H1 (cell line): ENCODE measurements at regions of chr1 and their contacts with region 1.

Region 1: GRCh38 chr1:47527658-47528255 is 89.9 kb downstream of the FOXD2 start:
- DNase-seq: peak in 1 of 2 experiments; percentile 79
- H3K4me3 ChIP-seq: no peak overlapping the region
- H3K27ac ChIP-seq: no peak overlapping the region
- H3K4me1 ChIP-seq: peaks cover 4 to 19% (median 6%) of the 10 kb centered on the region in 4 experiments; a peak in 6 of 7 replicates
- H3K27me3 ChIP-seq: peaks cover 0 to 2% (median 0%) of the 10 kb centered on the region in 4 experiments; a peak in 2 of 7 replicates
- CTCF ChIP-seq: peak; percentile 79 to 89 (median 87)
- EP300 ChIP-seq: no peak
- POLR2A ChIP-seq: no peak
- RAD21 ChIP-seq: peak; percentile 90 to 92

Region 2: DNA sequence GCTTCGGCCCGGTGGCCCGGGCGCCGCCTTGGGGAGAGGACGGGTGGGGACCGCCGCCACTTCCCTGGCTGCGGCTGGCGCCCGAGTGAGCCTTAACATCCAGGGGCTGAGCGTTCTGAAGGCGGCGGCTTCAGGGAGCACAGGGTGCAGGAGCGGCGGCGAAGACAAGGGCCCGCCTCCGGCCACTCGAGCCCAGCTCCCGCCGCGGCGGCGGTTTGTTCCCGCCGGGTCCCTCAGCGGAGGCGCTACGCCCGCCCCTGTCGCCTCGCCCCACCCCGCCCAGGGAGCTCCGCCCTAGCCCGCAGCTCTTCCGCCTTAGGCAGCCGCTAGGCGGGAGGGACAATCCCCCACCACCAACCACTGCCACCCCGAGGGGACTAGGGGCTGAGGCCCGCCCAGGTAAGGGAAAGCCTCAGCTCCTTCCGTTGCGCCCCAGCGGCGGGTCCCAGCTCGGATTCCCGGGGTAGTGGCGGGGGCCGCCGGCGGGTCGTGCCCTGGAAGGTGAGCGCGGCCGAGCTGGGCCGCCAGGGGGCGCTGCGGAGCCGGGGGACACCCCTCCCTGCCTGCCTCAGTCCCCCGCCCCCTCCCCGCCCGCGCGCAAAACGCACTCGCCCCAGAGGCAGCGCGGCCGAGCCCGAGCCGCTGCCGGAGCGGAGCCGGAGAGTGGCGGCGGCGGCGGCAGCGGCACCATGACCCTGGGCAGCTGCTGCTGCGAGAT is 90.2 kb before region 1 on chr1 and contains the start of gene FOXD2:
- CTCF ChIA-PET with region 1: interaction called, 26 read pairs
- POLR2A ChIA-PET with region 1: no interaction called
- DNase-seq: peak; percentile 61 to 99
- H3K4me3 ChIP-seq: peak within 1 kb of the TSS; percentile 16 to 65 (median 49)
- H3K27ac ChIP-seq: no peak within 1 kb of the TSS
- H3K4me1 ChIP-seq: peaks cover 3 to 36% (median 18%) of the 10 kb centered on the region in 4 experiments
- H3K27me3 ChIP-seq: peaks cover 92 to 99% (median 98%) of the 10 kb centered on the region in 4 experiments
- CTCF ChIP-seq: peak in 2 of 3 experiments; percentile 54 to 68; a peak in 3 of 4 replicates
- EP300 ChIP-seq: no peak
- POLR2A ChIP-seq: no peak
- RAD21 ChIP-seq: peak; percentile 30 to 38; a peak in 3 of 4 replicates
- total RNA-seq, gene FOXD2: not detected in 2 replicates

Region 3: GRCh38 chr1:47491341-47491753 is 36.4 kb before region 1 on chr1:
- CTCF ChIA-PET with region 1: interaction called, 10 read pairs
- POLR2A ChIA-PET with region 1: no interaction called
- DNase-seq: no peak
- H3K4me3 ChIP-seq: no peak overlapping the region
- H3K27ac ChIP-seq: no peak overlapping the region
- H3K4me1 ChIP-seq: peaks cover 0 to 6% (median 4%) of the 10 kb centered on the region in 4 experiments; a peak in 4 of 7 replicates
- H3K27me3 ChIP-seq: peaks cover 0 to 9% (median 4%) of the 10 kb centered on the region in 4 experiments; a peak in 5 of 7 replicates
- CTCF ChIP-seq: 0 out of 4 replicates have a peak, but pooled peaks of 1 of the 3 experiments have one; percentile 4
- EP300 ChIP-seq: no peak
- POLR2A ChIP-seq: no peak
- RAD21 ChIP-seq: peak in 1 of 2 experiments; percentile 11; a peak in 1 of 4 replicates

Region 4: DNA sequence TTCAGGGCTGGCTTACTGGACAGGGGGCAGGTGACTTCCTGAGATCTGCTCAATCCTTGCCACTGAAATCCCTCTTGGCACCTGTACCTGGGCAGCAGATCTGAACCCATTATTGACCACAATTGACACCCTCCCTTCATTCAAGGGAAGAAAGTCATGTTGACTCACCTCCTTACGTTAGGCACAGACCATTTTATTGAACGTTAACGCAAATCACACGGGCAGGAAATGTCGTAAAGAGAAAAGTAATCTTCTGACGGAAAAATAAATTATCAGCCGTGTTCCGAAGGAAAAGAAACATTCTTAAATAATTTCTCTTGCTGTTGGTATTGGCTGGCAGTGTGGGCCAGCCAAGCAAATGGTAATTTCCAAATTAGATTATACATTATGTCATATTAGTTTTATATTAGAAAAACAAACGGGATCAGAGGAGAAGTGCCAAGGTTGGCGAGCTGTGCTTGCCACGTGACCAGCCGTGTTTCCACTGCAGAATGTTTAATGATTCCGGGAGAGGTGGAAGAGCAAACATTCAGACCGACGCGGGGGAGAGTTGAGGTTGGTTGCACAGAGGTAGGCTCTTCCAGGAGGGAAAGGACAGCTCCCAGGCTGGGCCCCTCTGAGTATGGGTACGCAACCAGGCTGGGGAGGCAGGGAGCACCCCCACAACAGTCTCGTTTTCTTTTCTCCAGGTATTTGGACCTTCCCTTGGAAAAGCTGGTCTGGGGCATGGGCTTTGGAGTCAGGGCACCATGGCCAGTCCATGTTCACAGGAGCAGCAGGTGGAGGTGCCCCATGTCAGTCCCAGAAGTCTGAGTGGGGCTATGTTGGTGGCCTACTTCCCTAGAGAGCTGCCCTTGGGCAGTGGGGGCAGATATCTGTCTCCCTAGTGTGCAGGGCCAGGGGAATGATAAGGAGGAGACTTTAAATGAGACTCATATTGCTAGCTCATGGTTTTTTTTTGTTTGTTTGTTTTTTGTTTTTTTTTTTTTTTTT is 31.1 kb after region 1 on chr1:
- CTCF ChIA-PET with region 1: interaction called, 29 read pairs
- POLR2A ChIA-PET with region 1: no interaction called
- DNase-seq: no peak
- H3K4me3 ChIP-seq: no peak overlapping the region
- H3K27ac ChIP-seq: no peak overlapping the region
- H3K4me1 ChIP-seq: peaks cover 0 to 15% (median 4%) of the 10 kb centered on the region in 4 experiments; a peak in 3 of 7 replicates
- H3K27me3 ChIP-seq: peaks cover 0 to 3% (median 0%) of the 10 kb centered on the region in 4 experiments; a peak in 3 of 7 replicates
- CTCF ChIP-seq: no peak
- EP300 ChIP-seq: no peak
- POLR2A ChIP-seq: no peak
- RAD21 ChIP-seq: no peak

Region 5: DNA sequence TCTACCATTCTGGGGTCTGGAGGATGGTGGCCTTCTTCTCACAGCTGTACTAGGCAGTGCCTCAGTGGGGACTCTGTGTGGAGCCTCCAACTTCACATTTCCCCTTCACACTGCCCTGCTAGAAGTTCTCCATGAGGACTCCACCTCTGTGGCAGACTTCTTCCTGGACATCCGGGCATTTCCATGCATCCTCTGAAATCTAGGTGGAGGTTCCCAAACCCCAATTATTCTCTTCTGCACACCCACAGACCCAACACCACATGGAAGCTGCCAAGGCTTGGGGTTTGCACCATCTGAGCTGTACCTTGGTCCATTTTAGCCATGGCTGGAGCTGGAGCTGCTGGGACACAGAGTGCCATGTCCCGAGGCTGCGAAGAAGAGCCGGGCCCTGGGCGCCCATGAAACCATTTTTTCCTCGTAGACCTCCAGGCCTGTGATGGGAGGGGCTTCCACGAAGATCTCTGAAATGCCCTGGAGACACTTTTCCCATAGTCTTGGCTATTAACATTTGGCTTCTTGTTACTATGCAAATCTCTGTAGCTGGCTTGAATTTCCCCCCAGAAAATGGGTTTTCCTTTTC is 80.6 kb after region 1 on chr1:
- CTCF ChIA-PET with region 1: no interaction called
- POLR2A ChIA-PET with region 1: no interaction called
- DNase-seq: no peak
- H3K4me3 ChIP-seq: no peak overlapping the region
- H3K27ac ChIP-seq: no peak overlapping the region
- H3K4me1 ChIP-seq: no peaks in the 10 kb centered on the region
- H3K27me3 ChIP-seq: no peaks in the 10 kb centered on the region
- CTCF ChIP-seq: no peak
- EP300 ChIP-seq: no peak
- POLR2A ChIP-seq: no peak
- RAD21 ChIP-seq: no peak

Region 6: GRCh38 chr1:47618830-47619229 is 91.1 kb after region 1 on chr1:
- CTCF ChIA-PET with region 1: interaction called, 151 read pairs
- POLR2A ChIA-PET with region 1: no interaction called
- DNase-seq: peak in 1 of 2 experiments; percentile 28
- H3K4me3 ChIP-seq: no peak overlapping the region
- H3K27ac ChIP-seq: no peak overlapping the region
- H3K4me1 ChIP-seq: no peaks in the 10 kb centered on the region
- H3K27me3 ChIP-seq: no peaks in the 10 kb centered on the region; a peak in 3 of 7 replicates
- CTCF ChIP-seq: no peak
- EP300 ChIP-seq: no peak
- POLR2A ChIP-seq: no peak
- RAD21 ChIP-seq: no peak

Region 7: DNA sequence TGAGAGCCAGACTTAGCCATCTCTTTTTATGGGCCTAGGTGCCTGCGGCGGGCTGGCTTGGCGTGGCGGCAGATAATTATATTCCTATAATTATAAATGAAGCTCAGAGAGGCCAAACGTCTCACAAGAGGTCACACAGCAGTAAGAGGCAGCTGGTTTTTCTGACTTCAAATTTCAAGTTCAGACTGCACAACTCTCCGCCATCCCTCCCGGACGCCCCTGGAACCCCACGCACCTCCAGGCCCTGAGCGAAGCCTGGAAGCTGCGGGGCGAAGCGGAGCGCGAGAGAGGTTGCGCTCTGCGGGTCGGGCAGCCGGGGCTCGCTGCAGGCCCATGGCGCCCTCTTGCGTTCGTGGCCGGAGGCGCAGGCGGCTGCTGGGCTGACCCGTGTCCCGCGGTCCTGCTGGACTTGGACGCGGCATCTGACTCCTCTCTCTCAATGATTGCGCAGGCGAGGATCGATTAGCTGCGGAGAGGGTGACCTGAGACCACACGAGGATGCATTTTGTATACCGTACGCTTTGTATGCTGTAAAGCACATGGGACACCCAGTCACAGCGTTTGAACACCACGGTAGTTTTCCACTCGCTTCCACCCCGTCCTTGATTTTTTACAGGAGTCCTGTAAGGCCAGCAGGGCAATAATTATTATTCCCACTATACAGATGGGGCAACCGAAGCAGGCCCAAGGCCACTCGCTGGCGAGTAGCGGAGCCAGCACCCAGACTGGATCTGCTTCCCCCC is 182.7 kb after region 1 on chr1:
- CTCF ChIA-PET with region 1: interaction called, 172 read pairs
- POLR2A ChIA-PET with region 1: no interaction called
- DNase-seq: peak in 1 of 2 experiments; percentile 97
- H3K4me3 ChIP-seq: peak overlapping the region; percentile 20 to 63 (median 47); a peak in 4 of 8 replicates
- H3K27ac ChIP-seq: no peak overlapping the region
- H3K4me1 ChIP-seq: peaks cover 0 to 19% (median 5%) of the 10 kb centered on the region in 4 experiments; a peak in 3 of 7 replicates
- H3K27me3 ChIP-seq: peaks cover 44 to 74% (median 71%) of the 10 kb centered on the region in 4 experiments
- CTCF ChIP-seq: peak; percentile 93 to 97 (median 97)
- EP300 ChIP-seq: no peak
- POLR2A ChIP-seq: no peak
- RAD21 ChIP-seq: peak; percentile 93 to 96

Region 8: DNA sequence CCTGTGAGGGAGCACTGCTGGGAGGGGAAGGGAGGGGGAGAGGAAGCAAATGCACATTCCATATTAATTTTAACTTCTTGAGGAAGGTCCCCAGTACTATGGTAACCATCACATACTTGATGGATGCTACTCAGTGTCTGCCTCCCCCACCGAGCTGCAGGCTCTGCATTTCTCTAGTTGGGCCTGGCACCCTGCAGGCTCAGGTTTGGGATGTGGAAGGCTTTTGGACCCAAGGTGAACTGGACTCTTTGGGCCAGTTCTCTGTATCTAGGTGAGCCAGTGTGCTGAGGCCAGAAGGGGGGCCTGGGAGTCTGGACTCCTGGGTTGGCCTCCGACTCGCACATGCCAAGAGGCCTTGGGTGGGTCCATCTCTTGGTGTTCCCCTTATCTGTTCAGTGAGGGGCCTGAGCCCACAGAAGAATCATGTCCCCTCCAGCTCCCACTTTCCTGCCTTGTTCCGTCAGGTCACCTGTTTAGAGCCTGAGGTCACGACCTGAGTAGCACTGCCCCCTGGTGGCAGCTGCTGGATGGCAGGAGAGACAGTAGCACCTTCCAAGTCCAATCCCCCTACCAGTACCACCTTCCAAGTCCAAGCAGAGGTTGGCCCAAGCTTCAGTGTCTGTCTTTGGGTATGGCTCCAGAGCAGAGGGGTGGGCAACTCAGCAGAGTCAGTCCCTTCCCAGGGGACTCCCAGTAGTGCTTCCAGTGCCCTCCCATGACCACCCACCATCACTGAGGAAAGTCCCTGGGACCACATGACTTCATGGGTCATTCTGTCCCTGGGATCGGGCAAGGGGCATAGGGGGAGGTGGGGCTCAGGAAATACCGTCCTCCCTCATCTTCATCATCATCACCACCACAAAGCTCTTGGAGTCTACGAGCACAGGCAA is 227.6 kb after region 1 on chr1:
- CTCF ChIA-PET with region 1: interaction called, 13 read pairs
- POLR2A ChIA-PET with region 1: no interaction called
- DNase-seq: peak; percentile 41 to 93
- H3K4me3 ChIP-seq: no peak overlapping the region
- H3K27ac ChIP-seq: no peak overlapping the region
- H3K4me1 ChIP-seq: no peaks in the 10 kb centered on the region; a peak in 1 of 7 replicates
- H3K27me3 ChIP-seq: peaks cover 0 to 2% (median 0%) of the 10 kb centered on the region in 4 experiments; a peak in 1 of 7 replicates
- CTCF ChIP-seq: peak; percentile 75 to 97 (median 95)
- EP300 ChIP-seq: no peak
- POLR2A ChIP-seq: no peak
- RAD21 ChIP-seq: peak; percentile 51 to 64

Region 9: GRCh38 chr1:47986761-47987200 is 459.0 kb after region 1 on chr1:
- CTCF ChIA-PET with region 1: no interaction called
- POLR2A ChIA-PET with region 1: no interaction called
- DNase-seq: no peak
- H3K4me3 ChIP-seq: no peak overlapping the region
- H3K27ac ChIP-seq: no peak overlapping the region
- H3K4me1 ChIP-seq: peaks cover 17 to 32% (median 20%) of the 10 kb centered on the region in 4 experiments
- H3K27me3 ChIP-seq: peaks cover 0 to 14% (median 9%) of the 10 kb centered on the region in 4 experiments; a peak in 5 of 7 replicates
- CTCF ChIP-seq: no peak
- EP300 ChIP-seq: no peak
- POLR2A ChIP-seq: no peak
- RAD21 ChIP-seq: no peak

Region 10: DNA sequence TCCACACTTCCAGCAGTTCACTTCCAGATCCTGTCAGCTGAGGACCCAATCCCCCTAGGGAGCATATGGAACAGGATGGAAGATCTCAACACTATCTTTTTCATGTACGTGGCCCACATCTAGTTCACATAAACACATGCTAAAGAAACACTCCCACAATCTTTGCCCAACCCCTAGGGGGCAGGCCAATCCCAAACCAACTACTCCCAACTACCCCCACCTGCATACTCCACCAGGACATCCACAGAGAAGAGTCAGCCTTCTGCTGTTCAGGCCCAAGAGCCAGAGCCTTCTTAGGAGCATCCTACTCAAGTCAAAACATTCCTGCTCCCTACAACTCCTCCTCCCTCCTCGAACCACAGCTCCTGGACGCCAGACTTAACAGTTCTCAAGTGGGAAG is 689.2 kb after region 1 on chr1:
- CTCF ChIA-PET with region 1: no interaction called
- POLR2A ChIA-PET with region 1: no interaction called
- DNase-seq: no peak
- H3K4me3 ChIP-seq: no peak overlapping the region
- H3K27ac ChIP-seq: no peak overlapping the region
- H3K4me1 ChIP-seq: peaks cover 1 to 9% (median 5%) of the 10 kb centered on the region in 4 experiments; a peak in 3 of 7 replicates
- H3K27me3 ChIP-seq: no peaks in the 10 kb centered on the region
- CTCF ChIP-seq: peak; percentile 22 to 47 (median 31); a peak in 3 of 4 replicates
- EP300 ChIP-seq: no peak
- POLR2A ChIP-seq: no peak
- RAD21 ChIP-seq: peak; percentile 23 to 24; a peak in 2 of 4 replicates